ENCODE measurements at regions of chrX and their contacts with region 1.

Region 1: DNA sequence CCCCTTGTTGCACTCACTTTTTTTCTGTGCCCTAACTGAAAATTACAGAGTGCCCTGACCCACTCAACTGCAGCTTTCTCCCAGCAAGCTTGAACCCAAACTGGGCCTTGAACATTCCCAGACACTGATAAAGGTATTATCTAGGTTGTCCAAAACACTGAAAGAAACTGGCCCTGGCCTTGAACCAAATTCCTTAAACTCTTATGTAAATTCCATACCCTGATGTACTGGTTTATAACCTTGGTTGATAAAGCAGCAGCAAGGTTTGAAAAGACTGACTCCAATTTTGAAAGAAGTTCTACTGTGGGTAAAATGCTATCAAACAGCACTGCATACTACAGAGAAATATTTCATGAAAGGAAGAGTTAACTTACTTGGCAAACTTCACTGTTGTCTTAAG is 125.6 kb downstream of the PHF8 start:
- DNase-seq: no peak
- H3K4me3 ChIP-seq: no peak overlapping the region
- H3K27ac ChIP-seq: no peak overlapping the region
- H3K4me1 ChIP-seq: no peaks in the 10 kb centered on the region
- H3K27me3 ChIP-seq: no peaks in the 10 kb centered on the region
- CTCF ChIP-seq: no peak

Region 2: GRCh38 chrX:53616946-53617345 is 301.8 kb before region 1 on chrX:
- CTCF ChIA-PET with region 1: no interaction called
- POLR2A ChIA-PET with region 1: no interaction called
- intact Hi-C with region 1: no loop called
- DNase-seq: peak; percentile 77
- H3K4me3 ChIP-seq: no peak overlapping the region
- H3K27ac ChIP-seq: no peak overlapping the region
- H3K4me1 ChIP-seq: peaks cover 13% of the 10 kb centered on the region
- H3K27me3 ChIP-seq: no peaks in the 10 kb centered on the region
- CTCF ChIP-seq: no peak

Region 3: DNA sequence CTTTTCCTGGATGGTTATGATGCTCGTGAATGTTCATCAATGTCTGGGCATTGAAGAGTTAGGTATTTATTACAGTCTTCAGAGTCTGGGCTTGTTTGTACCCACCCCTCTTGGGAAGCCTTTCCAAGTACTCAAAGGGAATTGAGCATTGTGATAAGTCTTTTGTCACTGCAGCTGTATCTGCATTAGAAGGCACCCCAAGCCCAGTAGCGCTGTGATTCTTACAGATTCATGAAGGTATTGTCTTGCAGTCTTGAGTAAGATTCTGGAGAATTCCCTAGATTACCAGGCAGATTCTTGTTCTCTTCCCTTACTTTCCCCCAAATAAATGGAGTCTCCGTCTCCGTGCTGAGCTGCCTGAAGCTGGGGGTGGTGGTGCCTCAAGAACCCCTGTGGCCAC is 58.8 kb before region 1 on chrX:
- CTCF ChIA-PET with region 1: no interaction called
- POLR2A ChIA-PET with region 1: no interaction called
- intact Hi-C with region 1: loop called (anchors 10 kb)
- DNase-seq: no peak
- H3K4me3 ChIP-seq: no peak overlapping the region
- H3K27ac ChIP-seq: no peak overlapping the region
- H3K4me1 ChIP-seq: no peaks in the 10 kb centered on the region
- H3K27me3 ChIP-seq: no peaks in the 10 kb centered on the region
- CTCF ChIP-seq: no peak

Measured in A673 (cell line).